Activated naive CD4-positive, alpha-beta T cell treated with anti-CD3 and anti-CD28 coated beads for 36 hours (primary cell): ENCODE measurements at regions of chr17 and their contacts with region 1.

Region 1: DNA sequence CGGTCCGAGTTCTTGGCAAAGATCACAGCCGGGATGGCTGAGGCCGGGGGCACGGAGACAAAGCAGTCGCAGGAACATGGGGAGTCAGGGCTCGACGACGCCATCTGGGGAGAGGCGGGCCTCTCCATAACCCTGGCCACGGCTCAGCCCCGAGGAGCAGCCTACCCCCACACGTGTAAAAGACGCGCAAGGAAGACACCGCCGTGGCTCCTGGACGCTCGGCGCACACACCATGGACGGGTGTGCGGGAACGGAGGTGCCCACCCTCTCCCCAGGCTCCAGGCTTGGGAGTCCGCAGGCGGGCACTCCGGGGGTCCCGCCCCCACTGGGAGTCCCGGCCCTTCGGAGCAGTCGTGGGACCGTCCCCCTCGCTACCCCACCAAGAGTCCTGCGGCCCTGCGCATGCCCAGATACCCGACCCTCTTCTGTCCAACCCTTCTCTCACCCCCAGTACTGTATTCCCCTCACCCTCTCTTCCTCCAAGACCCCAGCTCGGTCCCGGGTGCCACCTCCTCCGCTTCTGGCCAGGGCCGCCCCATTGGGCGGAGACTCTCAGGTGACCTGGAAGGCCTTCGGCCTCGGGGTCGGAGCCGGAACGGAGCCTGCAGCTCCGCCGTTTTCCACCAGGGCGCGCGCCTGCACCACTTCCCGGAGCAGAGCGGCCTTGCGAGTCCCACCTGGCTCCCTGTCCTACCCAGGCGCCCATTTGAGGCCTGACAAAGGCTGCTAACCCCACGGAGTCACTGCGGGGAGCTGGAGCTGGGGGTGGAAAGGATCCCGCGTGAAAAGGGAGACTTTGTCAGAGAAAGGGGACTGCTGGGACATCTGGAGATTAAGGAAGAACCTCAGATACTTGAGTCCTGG is at the start of gene SCRN2:
- DNase-seq: peak; percentile 93
- H3K4me3 Mint-ChIP-seq: peak within 1 kb of the TSS; percentile 100
- H3K27ac Mint-ChIP-seq: peak within 1 kb of the TSS; percentile 85
- H3K4me1 Mint-ChIP-seq: peaks cover 35% of the 10 kb centered on the region
- H3K27me3 Mint-ChIP-seq: peaks cover 13% of the 10 kb centered on the region
- total RNA-seq, gene SCRN2: 15.1 to 16.3 TPM

Region 2: DNA sequence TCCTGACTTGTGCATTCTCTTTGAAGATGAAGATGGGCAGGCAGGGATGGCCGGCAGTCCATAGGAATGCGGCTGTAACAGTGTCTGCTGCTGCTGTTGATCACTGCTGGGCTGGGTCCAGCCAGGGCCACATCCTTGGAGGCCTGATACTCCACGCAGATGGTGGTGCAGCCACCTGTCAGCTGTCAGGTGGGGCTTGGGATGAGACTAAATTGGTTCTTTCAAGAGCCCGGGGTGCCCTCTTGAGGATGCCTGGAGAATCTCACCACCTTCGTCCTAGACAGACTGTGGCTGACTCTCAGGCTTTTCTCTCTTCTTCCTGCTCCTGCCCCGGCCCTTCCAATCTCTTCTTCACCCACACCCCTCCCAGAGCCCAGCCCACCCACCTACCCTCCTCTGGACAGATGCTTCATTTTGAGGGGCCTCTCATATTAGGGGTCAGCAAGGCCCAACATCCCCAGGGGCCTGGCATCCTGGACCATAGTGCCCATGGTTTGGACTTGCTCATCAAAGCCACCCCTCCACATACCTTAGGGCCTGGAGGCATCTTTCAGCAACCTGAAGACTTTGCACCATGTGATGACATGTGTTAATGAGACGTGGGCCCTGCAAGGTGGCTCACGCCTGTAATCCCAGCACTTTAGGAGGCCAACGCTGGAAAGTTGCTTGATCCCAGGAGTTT is 38.5 kb before region 1 on chr17:
- CTCF ChIA-PET with region 1: no interaction called
- intact Hi-C with region 1: no loop called
- DNase-seq: peak; percentile 73
- H3K4me3 Mint-ChIP-seq: no peak overlapping the region
- H3K27ac Mint-ChIP-seq: no peak overlapping the region
- H3K4me1 Mint-ChIP-seq: no peaks in the 10 kb centered on the region
- H3K27me3 Mint-ChIP-seq: no peaks in the 10 kb centered on the region

Region 3: GRCh38 chr17:47815106-47815918 is 25.7 kb before region 1 on chr17:
- CTCF ChIA-PET with region 1: no interaction called
- intact Hi-C with region 1: no loop called
- DNase-seq: no peak
- H3K4me3 Mint-ChIP-seq: no peak overlapping the region
- H3K27ac Mint-ChIP-seq: no peak overlapping the region
- H3K4me1 Mint-ChIP-seq: peaks cover 7% of the 10 kb centered on the region
- H3K27me3 Mint-ChIP-seq: no peaks in the 10 kb centered on the region

Region 4: DNA sequence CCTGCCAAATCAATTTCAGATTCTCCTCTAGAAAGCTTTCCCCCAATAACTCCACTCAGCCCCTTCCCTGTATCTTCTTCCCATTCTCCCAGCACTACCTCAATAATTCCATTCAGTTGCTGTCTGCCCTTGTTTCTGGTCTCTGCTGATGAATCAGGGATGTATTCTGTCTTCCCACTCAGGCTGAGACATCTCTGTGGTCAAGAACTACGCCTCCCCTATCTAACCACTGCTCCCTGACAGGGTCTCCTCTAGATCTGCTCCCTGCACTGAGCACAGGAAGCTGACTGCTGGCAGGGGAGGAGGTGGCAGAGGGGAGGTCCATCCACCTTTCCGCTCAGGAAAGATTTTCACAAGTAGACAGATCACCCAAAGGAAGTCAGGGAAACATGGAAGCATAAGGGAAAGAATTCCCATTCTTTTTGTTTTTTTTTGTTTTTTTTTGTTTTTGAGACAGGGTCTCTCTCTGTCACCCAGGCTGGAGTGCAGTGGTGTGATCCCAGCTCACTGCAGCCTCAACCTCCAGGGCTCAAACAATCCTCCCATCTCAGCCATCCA is 38.1 kb after region 1 on chr17:
- CTCF ChIA-PET with region 1: interaction called, 460 read pairs
- intact Hi-C with region 1: no loop called
- DNase-seq: no peak
- H3K4me3 Mint-ChIP-seq: no peak overlapping the region
- H3K27ac Mint-ChIP-seq: no peak overlapping the region
- H3K4me1 Mint-ChIP-seq: peaks cover 19% of the 10 kb centered on the region
- H3K27me3 Mint-ChIP-seq: peaks cover 14% of the 10 kb centered on the region

Region 5: DNA sequence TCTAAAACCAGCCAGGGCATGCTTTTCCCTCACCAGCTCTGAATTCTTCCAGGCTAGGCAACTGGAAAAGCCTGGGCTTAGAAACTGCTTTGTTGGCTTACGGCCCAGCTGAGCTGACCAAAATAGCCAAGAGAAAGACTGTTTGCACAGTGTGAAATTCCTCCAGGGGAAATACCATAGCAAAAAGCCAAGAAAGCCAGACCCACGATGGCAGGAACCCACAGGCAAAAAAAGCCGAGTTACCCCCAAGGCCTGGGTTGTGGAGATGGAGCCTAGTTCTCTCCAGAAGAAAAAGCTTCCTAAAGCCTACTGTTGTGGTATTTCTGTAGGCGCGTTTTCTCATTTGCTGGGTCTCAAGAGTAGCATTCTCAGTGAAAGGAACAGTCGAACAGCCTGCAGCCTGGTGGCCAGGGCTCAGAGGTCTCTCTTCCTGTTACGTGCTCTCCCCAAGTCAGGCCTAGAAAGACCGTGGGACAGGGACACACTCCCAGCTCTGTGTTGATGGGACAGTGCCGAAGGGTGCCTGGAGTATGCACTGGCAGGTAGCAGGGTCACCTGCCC is 64.3 kb after region 1 on chr17:
- CTCF ChIA-PET with region 1: interaction called, 10 read pairs
- intact Hi-C with region 1: no loop called
- DNase-seq: no peak
- H3K4me3 Mint-ChIP-seq: no peak overlapping the region
- H3K27ac Mint-ChIP-seq: no peak overlapping the region
- H3K4me1 Mint-ChIP-seq: peaks cover 23% of the 10 kb centered on the region
- H3K27me3 Mint-ChIP-seq: no peaks in the 10 kb centered on the region

Region 6: GRCh38 chr17:47949136-47949759 is 108.3 kb after region 1 on chr17:
- CTCF ChIA-PET with region 1: interaction called, 26 read pairs
- intact Hi-C with region 1: loop called (anchors 2 kb)
- DNase-seq: peak; percentile 88
- H3K4me3 Mint-ChIP-seq: peak overlapping the region; percentile 49
- H3K27ac Mint-ChIP-seq: peak overlapping the region; percentile 67
- H3K4me1 Mint-ChIP-seq: peaks cover 41% of the 10 kb centered on the region
- H3K27me3 Mint-ChIP-seq: no peaks in the 10 kb centered on the region

Region 7: GRCh38 chr17:48107168-48108132 is 266.5 kb after region 1 on chr17 and contains the start of gene SNX11:
- CTCF ChIA-PET with region 1: no interaction called
- intact Hi-C with region 1: loop called (anchors 10 kb)
- DNase-seq: peak; percentile 96
- H3K4me3 Mint-ChIP-seq: peak within 1 kb of the TSS; percentile 97
- H3K27ac Mint-ChIP-seq: peak within 1 kb of the TSS; percentile 93
- H3K4me1 Mint-ChIP-seq: peaks cover 56% of the 10 kb centered on the region
- H3K27me3 Mint-ChIP-seq: no peaks in the 10 kb centered on the region
- total RNA-seq, gene SNX11: 20.2 to 23.0 TPM